Activated CD4-positive, alpha-beta T cell treated with anti-CD3 and anti-CD28 coated beads for 36 hours (primary cell): ENCODE measurements at regions of chr1 and their contacts with region 1.

Region 1: DNA sequence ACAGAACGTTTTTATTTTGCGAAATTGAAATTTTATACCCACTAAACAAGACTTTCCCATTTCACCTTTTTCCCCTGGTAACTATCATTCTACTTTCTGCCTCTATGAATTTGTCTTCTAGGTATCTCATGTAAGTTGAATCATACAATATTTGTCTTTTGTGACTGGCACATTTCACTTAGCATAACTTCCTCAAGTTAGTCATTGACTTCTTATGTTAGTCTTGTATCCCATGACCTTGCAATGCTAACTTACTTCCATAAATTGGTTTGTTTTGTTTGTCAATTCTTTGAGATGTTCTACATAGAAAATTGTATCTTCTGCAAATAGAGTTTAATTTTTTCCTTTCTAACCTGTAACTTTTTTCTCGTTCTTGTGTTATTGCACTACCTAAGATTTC is 26.9 kb downstream of the SH3BP5L start:
- DNase-seq: no peak
- ATAC-seq: no peak
- H3K4me3 Mint-ChIP-seq: no peak overlapping the region
- H3K27ac Mint-ChIP-seq: no peak overlapping the region
- H3K4me1 Mint-ChIP-seq: peaks cover 1% of the 10 kb centered on the region
- H3K27me3 Mint-ChIP-seq: peaks cover 19% of the 10 kb centered on the region

Region 2: DNA sequence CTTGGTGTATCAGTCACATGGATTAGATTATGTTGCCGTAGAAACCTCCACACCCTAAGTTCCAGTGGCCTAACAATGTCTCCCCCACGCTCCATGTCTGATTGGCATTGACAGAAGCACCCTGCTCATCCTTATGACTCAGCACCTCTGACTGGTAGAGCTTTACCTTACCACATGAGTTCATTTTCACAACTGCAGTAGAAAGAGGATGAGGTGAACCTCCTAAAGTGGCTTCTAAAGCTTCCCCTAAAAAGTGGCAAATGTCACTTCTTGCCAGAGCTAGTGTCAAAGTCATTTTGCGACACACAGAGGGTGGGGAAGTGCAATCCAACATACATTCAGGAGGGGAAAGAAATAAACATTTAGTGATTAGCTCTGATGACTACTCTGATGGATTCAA is 12.6 kb before region 1 on chr1:
- CTCF ChIA-PET with region 1: interaction called, 3 read pairs
- POLR2A ChIA-PET with region 1: no interaction called
- intact Hi-C with region 1: loop called in 1 of 2 experiments (anchors 1 kb)
- DNase-seq: no peak
- ATAC-seq: peak; percentile 74
- H3K4me3 Mint-ChIP-seq: no peak overlapping the region
- H3K27ac Mint-ChIP-seq: no peak overlapping the region
- H3K4me1 Mint-ChIP-seq: peaks cover 2% of the 10 kb centered on the region
- H3K27me3 Mint-ChIP-seq: peaks cover 7% of the 10 kb centered on the region

Region 3: DNA sequence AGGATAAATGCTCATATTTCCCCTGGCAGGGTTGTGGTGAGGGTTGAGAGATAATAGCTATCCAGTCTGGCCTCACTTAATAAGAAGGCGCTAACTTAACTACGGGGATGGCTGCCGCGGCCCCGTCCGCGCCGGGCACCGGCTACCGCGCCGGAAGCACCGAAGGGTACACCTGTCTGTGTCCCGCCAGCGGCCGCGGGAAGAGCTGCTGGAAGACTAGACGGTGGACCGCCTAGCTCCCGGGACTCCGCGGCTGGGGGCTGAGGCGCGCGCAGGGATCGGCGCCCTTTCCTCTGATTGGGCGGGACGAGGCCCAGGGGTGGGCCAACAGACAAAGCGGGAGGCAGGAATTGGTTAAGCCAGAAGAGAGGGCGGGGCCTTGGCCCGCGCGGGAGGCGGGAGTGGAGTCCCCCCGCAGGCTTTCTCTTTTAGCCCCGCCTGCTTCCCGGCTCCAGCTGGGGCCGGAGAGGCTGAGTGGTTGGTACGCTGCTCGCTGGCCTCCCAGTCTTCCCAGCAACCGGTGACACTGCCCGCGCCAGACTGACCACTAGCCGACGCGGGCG is 39.1 kb after region 1 on chr1 and contains the start of gene ZNF672:
- CTCF ChIA-PET with region 1: no interaction called
- POLR2A ChIA-PET with region 1: no interaction called
- intact Hi-C with region 1: no loop called
- DNase-seq: peak; percentile 96
- ATAC-seq: peak; percentile 89
- H3K4me3 Mint-ChIP-seq: no peak within 1 kb of the TSS
- H3K27ac Mint-ChIP-seq: peak within 1 kb of the TSS; percentile 93
- H3K4me1 Mint-ChIP-seq: peaks cover 24% of the 10 kb centered on the region
- H3K27me3 Mint-ChIP-seq: no peaks in the 10 kb centered on the region
- total RNA-seq, gene ZNF672: 39.5 to 49.4 TPM